ENCODE measurements at regions of chr3 and their contacts with region 1.

Region 1: GRCh38 chr3:46976326-46977190 is at the start of gene CCDC12:
- DNase-seq: peak; percentile 91 to 99 (median 96)

Region 2: DNA sequence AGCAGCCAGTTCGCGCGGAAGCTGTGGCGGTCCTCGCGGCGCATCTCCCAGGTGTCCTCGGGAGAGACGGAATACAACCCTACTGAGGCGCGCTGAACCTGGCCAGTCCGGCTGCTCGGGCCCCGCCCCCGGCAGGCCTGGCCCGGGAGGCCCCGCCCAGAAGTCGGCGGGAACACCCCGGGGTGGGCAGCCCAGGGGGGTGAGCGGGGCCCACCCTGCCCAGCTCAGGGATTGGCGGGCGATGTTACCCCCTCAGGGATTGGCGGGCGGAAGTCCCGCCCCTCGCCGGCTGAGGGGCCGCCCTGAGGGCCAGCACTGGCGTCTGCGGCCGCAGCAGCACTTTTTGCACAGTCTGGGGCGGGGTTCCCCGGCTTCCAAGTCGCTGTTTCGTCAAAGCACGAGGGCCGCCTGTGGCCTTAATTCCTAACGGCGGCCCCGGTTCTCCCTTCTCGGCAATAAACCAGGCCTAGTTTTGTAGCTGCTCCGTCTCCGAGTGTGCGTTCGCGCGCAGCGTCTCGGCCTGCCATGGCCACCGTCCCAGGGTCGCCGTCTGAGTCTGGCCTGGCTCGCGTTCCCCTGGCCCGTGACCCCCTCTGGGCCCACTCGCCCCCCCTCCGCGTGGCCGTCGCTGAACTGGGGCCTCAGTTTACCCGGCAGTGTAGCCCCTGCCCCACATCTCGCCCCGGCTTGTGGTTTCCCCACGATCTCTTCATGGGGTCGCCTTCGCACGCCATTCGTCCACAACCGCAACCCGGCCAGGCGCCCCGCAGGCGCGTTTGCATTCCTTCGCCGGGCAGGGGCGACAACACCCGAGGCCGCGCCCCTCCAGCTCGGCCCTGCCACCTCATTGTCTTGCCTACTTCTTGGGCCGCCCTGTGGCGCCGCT is 32.9 kb after region 1 on chr3:
- intact Hi-C with region 1: loop called (anchors 1 kb)
- DNase-seq: peak; percentile 79 to 99 (median 90)

Region 3: DNA sequence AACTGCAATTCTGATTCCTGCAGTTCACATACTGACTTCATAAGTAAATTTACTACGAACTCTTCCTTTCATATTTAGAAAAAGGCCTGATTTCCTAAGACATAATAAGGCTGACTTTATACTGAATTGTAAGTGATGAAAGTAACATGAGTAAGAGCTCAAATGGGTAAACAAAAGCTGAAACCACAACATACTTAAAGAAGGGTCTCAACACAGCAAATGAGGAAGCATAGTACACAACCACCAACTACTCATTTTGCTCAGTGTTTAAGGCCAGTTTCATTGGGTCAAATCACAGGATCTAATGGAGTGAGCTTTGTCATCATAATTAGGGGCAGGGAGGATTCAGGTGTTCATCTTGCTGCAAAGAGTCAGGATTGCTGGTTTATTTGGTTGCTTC is 106.0 kb after region 1 on chr3:
- intact Hi-C with region 1: no loop called
- DNase-seq: no peak

Region 4: GRCh38 chr3:47282424-47283192 is 306.1 kb after region 1 on chr3 and contains the starts of genes KIF9 and KLHL18:
- intact Hi-C with region 1: loop called (anchors 5 kb)
- DNase-seq: peak; percentile 88 to 98 (median 93)

Measured in posterior cingulate gyrus (tissue), 11 donors.